ENCODE measurements at regions of chr14 and their contacts with region 1.

Region 1: DNA sequence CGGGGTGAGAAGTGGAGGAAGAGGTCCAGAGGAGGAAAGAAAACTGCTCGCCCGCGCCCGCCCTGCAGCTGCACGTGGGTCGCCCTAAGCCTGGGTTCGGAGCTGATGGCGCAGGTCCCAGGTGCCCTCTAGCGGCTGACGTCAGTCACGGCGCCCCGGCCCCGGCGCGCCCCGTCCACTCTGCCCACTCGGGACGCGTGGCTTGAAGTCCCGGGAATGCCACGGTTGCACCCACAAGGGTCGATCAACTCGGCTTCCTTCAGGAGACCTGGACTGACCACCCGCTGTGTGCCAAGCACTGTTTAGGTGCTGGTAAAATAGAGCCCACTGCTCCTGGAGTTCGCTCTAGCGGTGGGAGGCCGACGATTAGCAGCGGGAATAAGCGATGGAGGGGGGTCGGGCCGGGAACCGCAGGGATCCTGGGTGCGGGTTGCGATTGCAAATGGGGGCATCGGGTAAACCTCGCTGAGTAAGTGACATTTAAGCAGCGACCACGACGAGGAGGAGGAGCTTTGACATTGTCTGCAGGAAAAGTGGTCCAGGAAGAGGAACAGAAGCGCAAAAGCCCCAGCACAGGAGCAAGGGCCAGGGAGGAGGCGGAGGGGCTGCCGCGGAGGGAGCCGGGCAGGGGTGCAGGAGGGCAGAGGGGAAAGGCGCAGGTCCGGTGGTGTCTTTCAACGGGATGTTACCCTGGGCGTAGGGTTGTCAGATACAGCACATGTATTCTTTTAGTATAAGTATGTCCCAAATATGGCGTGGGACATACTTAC is 5.1 kb upstream of the ZNF839 start:
- DNase-seq: peak; percentile 91
- ATAC-seq: peak; percentile 89
- H3K4me3 ChIP-seq: peak overlapping the region; percentile 51
- H3K27ac ChIP-seq: no peak overlapping the region
- H3K4me1 ChIP-seq: peaks cover 14% of the 10 kb centered on the region
- H3K27me3 ChIP-seq: no peaks in the 10 kb centered on the region
- CTCF ChIP-seq: peak; percentile 94

Region 2: DNA sequence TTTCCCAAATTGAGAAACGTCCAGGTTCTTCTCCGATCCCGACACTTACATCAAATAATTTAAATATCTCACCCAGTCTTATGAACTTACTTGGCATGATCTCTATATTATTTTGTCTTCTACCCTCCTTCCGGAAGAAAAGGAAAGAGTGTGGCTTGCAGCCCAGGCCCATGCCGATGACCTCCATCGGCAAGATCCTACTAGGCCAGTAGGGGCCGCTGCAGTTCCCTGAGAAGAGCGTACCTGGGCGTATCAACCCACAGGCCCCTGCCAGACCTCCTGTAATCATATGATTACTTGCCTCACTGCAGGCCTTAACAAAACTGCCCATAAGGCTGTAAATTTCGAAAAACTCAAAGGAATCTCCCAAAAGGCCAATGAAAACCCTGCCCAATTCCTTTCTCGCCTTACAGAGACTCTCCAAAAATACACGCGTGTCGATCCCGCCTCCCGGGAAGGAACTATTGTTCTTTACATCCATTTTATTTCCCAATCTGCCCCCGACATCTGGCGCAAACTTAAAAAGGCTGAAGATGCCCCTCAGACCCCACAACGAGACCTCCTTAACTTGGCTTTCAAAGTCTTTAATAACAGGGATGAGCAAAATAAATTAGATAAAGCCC is 79.0 kb before region 1 on chr14:
- intact Hi-C with region 1: loop called (anchors 2 kb)
- DNase-seq: peak; percentile 88
- ATAC-seq: peak; percentile 95
- H3K4me3 ChIP-seq: no peak overlapping the region
- H3K27ac ChIP-seq: no peak overlapping the region
- H3K4me1 ChIP-seq: no peaks in the 10 kb centered on the region
- H3K27me3 ChIP-seq: no peaks in the 10 kb centered on the region
- CTCF ChIP-seq: peak; percentile 86

Region 3: GRCh38 chr14:102333795-102334705 is 19.6 kb after region 1 on chr14:
- intact Hi-C with region 1: no loop called
- DNase-seq: no peak
- ATAC-seq: peak; percentile 50
- H3K4me3 ChIP-seq: no peak overlapping the region
- H3K27ac ChIP-seq: no peak overlapping the region
- H3K4me1 ChIP-seq: no peaks in the 10 kb centered on the region
- H3K27me3 ChIP-seq: no peaks in the 10 kb centered on the region
- CTCF ChIP-seq: no peak

Region 4: GRCh38 chr14:102579696-102580334 is 265.4 kb after region 1 on chr14:
- intact Hi-C with region 1: no loop called
- DNase-seq: peak; percentile 74
- ATAC-seq: peak; percentile 39
- H3K4me3 ChIP-seq: no peak overlapping the region
- H3K27ac ChIP-seq: no peak overlapping the region
- H3K4me1 ChIP-seq: no peaks in the 10 kb centered on the region
- H3K27me3 ChIP-seq: no peaks in the 10 kb centered on the region
- CTCF ChIP-seq: no peak